AG04449 (cell line): ENCODE measurements at regions of chr6 and their contacts with region 1.

Region 1: GRCh38 chr6:1686117-1687098 is 76.7 kb downstream of the FOXC1 start:
- DNase-seq: peak; percentile 99
- H3K4me3 ChIP-seq: peak overlapping the region; percentile 2; the same call in 1 of the 2 replicates
- CTCF ChIP-seq: no peak

Region 2: GRCh38 chr6:1485678-1486077 is 200.7 kb before region 1 on chr6:
- CTCF ChIA-PET with region 1: no interaction called
- POLR2A ChIA-PET with region 1: no interaction called
- DNase-seq: no peak
- H3K4me3 ChIP-seq: no peak overlapping the region
- CTCF ChIP-seq: no peak

Region 3: GRCh38 chr6:1665214-1665613 is 21.2 kb before region 1 on chr6:
- CTCF ChIA-PET with region 1: interaction called, 10 read pairs
- POLR2A ChIA-PET with region 1: no interaction called
- DNase-seq: no peak
- H3K4me3 ChIP-seq: no peak overlapping the region
- CTCF ChIP-seq: no peak

Region 4: DNA sequence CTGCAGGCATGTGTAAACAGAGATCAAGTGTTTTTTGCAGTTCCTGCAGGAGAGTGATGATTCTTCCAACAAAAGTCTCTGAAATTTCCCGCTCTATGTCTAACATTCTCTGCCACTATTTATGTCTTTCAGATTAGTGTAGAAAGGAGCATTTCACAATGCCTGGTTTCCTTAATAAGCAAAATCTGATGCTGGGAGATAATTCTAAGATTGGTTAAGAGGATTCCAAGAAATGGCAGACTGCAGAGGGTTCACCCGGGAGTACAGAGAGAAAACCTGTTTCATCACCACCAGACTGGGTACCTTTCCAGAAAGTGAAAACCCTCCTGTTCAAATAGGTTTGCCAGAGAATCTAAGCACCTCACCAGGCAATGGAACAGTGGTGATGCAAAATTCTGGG is 14.0 kb before region 1 on chr6:
- CTCF ChIA-PET with region 1: interaction called, 10 read pairs
- POLR2A ChIA-PET with region 1: no interaction called
- DNase-seq: no peak
- H3K4me3 ChIP-seq: no peak overlapping the region
- CTCF ChIP-seq: no peak

Region 5: GRCh38 chr6:1701668-1702353 is 15.4 kb after region 1 on chr6:
- CTCF ChIA-PET with region 1: interaction called, 78 read pairs
- POLR2A ChIA-PET with region 1: interaction called, 4 read pairs
- DNase-seq: peak; percentile 95
- H3K4me3 ChIP-seq: peak overlapping the region; percentile 42
- CTCF ChIP-seq: no peak